Activated naive CD4-positive, alpha-beta T cell treated with anti-CD3 and anti-CD28 coated beads, Interleukin-2, amount 10 ng/mL, durations not matched to agents 7 days and 5 days (primary cell): ENCODE measurements at regions of chr20 and their contacts with region 1.

Region 1: GRCh38 chr20:23050847-23051631 is 1.6 kb upstream of the THBD start:
- DNase-seq: peak; percentile 30
- H3K4me3 Mint-ChIP-seq: no peak overlapping the region
- H3K27ac Mint-ChIP-seq: no peak overlapping the region
- H3K4me1 Mint-ChIP-seq: no peaks in the 10 kb centered on the region
- H3K27me3 Mint-ChIP-seq: peaks cover 74% of the 10 kb centered on the region

Region 2: DNA sequence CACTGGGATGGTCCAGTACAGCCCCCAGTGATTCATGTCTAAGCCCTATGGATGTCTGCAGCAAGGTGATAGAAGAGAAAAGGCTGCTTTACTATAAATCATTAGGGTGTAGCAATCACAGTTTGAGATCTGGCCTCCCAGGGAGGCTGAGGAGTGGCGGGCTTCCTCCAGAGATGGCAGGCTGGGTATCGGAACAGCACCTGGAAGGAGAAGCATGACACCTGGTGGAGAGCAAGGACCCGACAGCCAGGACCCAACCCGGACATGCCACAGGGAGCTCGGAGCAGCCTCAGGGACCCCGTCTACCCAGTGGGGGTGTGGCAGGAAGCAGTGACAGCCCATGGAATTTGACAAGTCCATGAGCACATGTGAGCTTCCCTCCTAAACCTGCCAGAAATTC is 149.9 kb after region 1 on chr20:
- CTCF ChIA-PET with region 1: interaction called, 14 read pairs
- DNase-seq: no peak
- H3K4me3 Mint-ChIP-seq: no peak overlapping the region
- H3K27ac Mint-ChIP-seq: no peak overlapping the region
- H3K4me1 Mint-ChIP-seq: no peaks in the 10 kb centered on the region
- H3K27me3 Mint-ChIP-seq: peaks cover 22% of the 10 kb centered on the region

Region 3: GRCh38 chr20:23235173-23236027 is 184.4 kb after region 1 on chr20:
- CTCF ChIA-PET with region 1: interaction called, 28 read pairs
- DNase-seq: peak; percentile 50
- H3K4me3 Mint-ChIP-seq: no peak overlapping the region
- H3K27ac Mint-ChIP-seq: no peak overlapping the region
- H3K4me1 Mint-ChIP-seq: no peaks in the 10 kb centered on the region
- H3K27me3 Mint-ChIP-seq: peaks cover 9% of the 10 kb centered on the region